ENCODE measurements at regions of chr13 and their contacts with region 1.

Region 1: GRCh38 chr13:24254146-24254841 is 55.1 kb upstream of the C1QTNF9 start:
- DNase-seq: peak in 7 of 9 donors; percentile 59 to 80 (median 68)
- ATAC-seq: peak; percentile 76
- H3K4me3 ChIP-seq: peak overlapping the region; percentile 82
- H3K4me3 Mint-ChIP-seq: peak overlapping the region; percentile 86 to 96 (median 92)
- H3K27ac ChIP-seq: peak overlapping the region; percentile 90
- H3K27ac Mint-ChIP-seq: peak overlapping the region; percentile 86 to 99 (median 95)
- H3K4me1 ChIP-seq: peaks cover 58 to 75% of the 10 kb centered on the region in 2 donors
- H3K4me1 Mint-ChIP-seq: peaks cover 44 to 96% (median 91%) of the 10 kb centered on the region in 7 donors
- H3K27me3 ChIP-seq: no peaks in the 10 kb centered on the region
- H3K27me3 Mint-ChIP-seq: no peaks in the 10 kb centered on the region

Region 2: GRCh38 chr13:23966691-23967615 is 287.3 kb before region 1 on chr13:
- CTCF ChIA-PET with region 1: no interaction called
- POLR2A ChIA-PET with region 1: no interaction called
- intact Hi-C with region 1: loop called in 1 of 2 experiments (anchors 1 kb)
- DNase-seq: peak in 6 of 9 donors; percentile 19 to 58 (median 48)
- ATAC-seq: peak; percentile 79
- H3K4me3 ChIP-seq: peak overlapping the region; percentile 57
- H3K4me3 Mint-ChIP-seq: peak overlapping the region; percentile 65 to 88 (median 84)
- H3K27ac ChIP-seq: peak overlapping the region; percentile 52
- H3K27ac Mint-ChIP-seq: peak overlapping the region; percentile 18 to 93 (median 88)
- H3K4me1 ChIP-seq: peaks cover 6% of the 10 kb centered on the region in 2 donors
- H3K4me1 Mint-ChIP-seq: peaks cover 6 to 39% (median 18%) of the 10 kb centered on the region in 7 donors
- H3K27me3 ChIP-seq: no peaks in the 10 kb centered on the region
- H3K27me3 Mint-ChIP-seq: no peaks in the 10 kb centered on the region

Region 3: DNA sequence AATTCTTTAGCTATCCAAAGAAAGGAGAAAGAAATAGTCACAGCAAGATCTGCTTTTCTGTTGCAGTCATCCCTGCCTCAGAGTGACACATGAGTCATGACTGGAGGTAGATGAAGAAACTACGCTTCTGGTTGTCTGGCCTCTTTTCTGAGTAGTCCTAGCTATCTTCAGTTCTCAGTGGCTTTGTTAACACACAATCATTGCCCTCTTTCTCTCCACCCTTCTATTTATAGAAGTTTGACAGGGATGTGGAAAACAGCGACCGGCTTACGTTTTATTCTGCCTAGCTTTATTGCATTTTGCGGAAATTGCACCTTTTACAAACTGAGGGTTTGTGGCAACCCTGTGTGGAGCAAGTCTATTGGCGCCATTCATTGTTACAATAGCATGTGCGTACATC is 67.1 kb before region 1 on chr13:
- CTCF ChIA-PET with region 1: no interaction called
- POLR2A ChIA-PET with region 1: no interaction called
- intact Hi-C with region 1: no loop called
- DNase-seq: no peak
- ATAC-seq: peak; percentile 57
- H3K4me3 ChIP-seq: no peak overlapping the region
- H3K4me3 Mint-ChIP-seq: no peak overlapping the region
- H3K27ac ChIP-seq: no peak overlapping the region
- H3K27ac Mint-ChIP-seq: peak overlapping the region in 1 of 9 donors; percentile 7
- H3K4me1 ChIP-seq: peaks cover 0 to 4% of the 10 kb centered on the region in 2 donors
- H3K4me1 Mint-ChIP-seq: peaks cover 3 to 28% (median 10%) of the 10 kb centered on the region in 7 donors
- H3K27me3 ChIP-seq: no peaks in the 10 kb centered on the region
- H3K27me3 Mint-ChIP-seq: no peaks in the 10 kb centered on the region

Region 4: DNA sequence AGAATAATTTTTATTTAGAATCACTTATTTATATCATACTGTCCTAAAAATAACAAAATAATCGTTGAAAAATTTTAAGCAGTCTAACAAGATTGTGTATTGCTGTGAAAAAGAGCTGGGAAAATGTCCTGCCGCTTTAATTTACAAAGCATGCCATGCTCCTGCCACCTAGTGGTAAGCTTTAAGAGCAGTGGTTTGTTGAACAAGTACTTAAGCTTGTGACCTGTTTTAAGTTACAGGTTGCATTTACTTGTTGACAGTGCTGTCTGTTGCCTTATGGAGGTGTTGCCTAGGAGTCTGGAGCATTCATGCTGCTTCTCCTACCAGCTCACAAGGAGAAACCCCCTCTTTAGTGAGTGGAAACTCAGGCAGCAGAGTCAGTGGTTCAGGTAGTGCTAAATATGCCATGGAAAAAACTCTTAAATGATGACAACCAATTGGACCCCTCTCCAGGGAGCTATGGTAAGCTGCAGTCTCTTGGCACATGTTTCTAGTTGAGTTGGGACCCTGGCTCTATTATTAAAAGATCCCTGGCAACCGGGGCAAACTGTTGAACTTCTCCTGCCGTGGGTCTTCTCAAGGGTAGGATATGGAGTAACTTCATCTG is 25.3 kb before region 1 on chr13:
- CTCF ChIA-PET with region 1: interaction called, 4 read pairs
- POLR2A ChIA-PET with region 1: interaction called, 5 read pairs
- intact Hi-C with region 1: loop called in 1 of 2 experiments (anchors 2 kb)
- DNase-seq: peak in 6 of 9 donors; percentile 39 to 57 (median 46)
- ATAC-seq: peak; percentile 73
- H3K4me3 ChIP-seq: no peak overlapping the region
- H3K4me3 Mint-ChIP-seq: no peak overlapping the region
- H3K27ac ChIP-seq: no peak overlapping the region
- H3K27ac Mint-ChIP-seq: no peak overlapping the region
- H3K4me1 ChIP-seq: peaks cover 0 to 40% of the 10 kb centered on the region in 2 donors
- H3K4me1 Mint-ChIP-seq: peaks cover 9 to 46% (median 19%) of the 10 kb centered on the region in 7 donors
- H3K27me3 ChIP-seq: no peaks in the 10 kb centered on the region
- H3K27me3 Mint-ChIP-seq: no peaks in the 10 kb centered on the region

Region 5: DNA sequence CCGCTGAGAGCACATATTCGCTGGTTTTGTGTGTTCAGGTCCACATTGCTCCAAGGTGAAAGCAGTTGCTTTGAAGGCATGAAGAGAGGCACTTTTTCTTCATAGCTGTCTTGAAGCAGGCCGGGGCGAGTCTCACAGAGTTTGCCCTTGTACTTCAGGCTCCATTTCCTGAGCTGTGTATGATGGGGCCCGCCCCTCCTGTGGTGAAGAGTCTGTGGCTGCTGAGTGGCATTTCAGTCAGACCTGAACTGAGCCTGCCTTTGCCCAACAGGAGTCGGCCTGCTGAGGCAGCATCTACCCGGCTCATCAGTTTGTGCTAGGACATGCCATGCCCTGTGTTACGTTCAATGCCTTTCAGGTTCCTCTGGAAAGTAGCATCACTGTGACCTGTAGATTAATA is 10.7 kb after region 1 on chr13:
- CTCF ChIA-PET with region 1: interaction called, 62 read pairs
- POLR2A ChIA-PET with region 1: interaction called, 637 read pairs
- intact Hi-C with region 1: loop called (anchors 1 kb)
- DNase-seq: peak; percentile 48 to 85 (median 83)
- ATAC-seq: peak; percentile 97
- H3K4me3 ChIP-seq: peak overlapping the region; percentile 28
- H3K4me3 Mint-ChIP-seq: peak overlapping the region; percentile 79 to 85 (median 82)
- H3K27ac ChIP-seq: peak overlapping the region; percentile 89
- H3K27ac Mint-ChIP-seq: peak overlapping the region; percentile 91 to 100 (median 98)
- H3K4me1 ChIP-seq: peaks cover 88 to 94% of the 10 kb centered on the region in 2 donors
- H3K4me1 Mint-ChIP-seq: peaks cover 64 to 98% (median 94%) of the 10 kb centered on the region in 7 donors
- H3K27me3 ChIP-seq: no peaks in the 10 kb centered on the region
- H3K27me3 Mint-ChIP-seq: no peaks in the 10 kb centered on the region

Region 6: GRCh38 chr13:24288870-24289269 is 34.6 kb after region 1 on chr13:
- CTCF ChIA-PET with region 1: interaction called, 6 read pairs
- POLR2A ChIA-PET with region 1: interaction called, 4 read pairs
- intact Hi-C with region 1: loop called (anchors 5 kb)
- DNase-seq: no peak
- ATAC-seq: no peak
- H3K4me3 ChIP-seq: no peak overlapping the region
- H3K4me3 Mint-ChIP-seq: no peak overlapping the region
- H3K27ac ChIP-seq: no peak overlapping the region
- H3K27ac Mint-ChIP-seq: no peak overlapping the region
- H3K4me1 ChIP-seq: no peaks in the 10 kb centered on the region
- H3K4me1 Mint-ChIP-seq: peaks cover 0 to 6% (median 2%) of the 10 kb centered on the region in 7 donors
- H3K27me3 ChIP-seq: no peaks in the 10 kb centered on the region
- H3K27me3 Mint-ChIP-seq: no peaks in the 10 kb centered on the region

Region 7: GRCh38 chr13:24512197-24512907 is 258.1 kb after region 1 on chr13 and contains the start of gene PARP4:
- CTCF ChIA-PET with region 1: no interaction called
- POLR2A ChIA-PET with region 1: no interaction called
- intact Hi-C with region 1: loop called (anchors 1 kb)
- DNase-seq: peak; percentile 49 to 74 (median 68)
- ATAC-seq: peak; percentile 85
- H3K4me3 ChIP-seq: peak within 1 kb of the TSS; percentile 95
- H3K4me3 Mint-ChIP-seq: peak within 1 kb of the TSS; percentile 88 to 96 (median 92)
- H3K27ac ChIP-seq: peak within 1 kb of the TSS; percentile 67
- H3K27ac Mint-ChIP-seq: peak within 1 kb of the TSS; percentile 68 to 93 (median 88)
- H3K4me1 ChIP-seq: peaks cover 3 to 7% of the 10 kb centered on the region in 2 donors
- H3K4me1 Mint-ChIP-seq: peaks cover 22 to 51% (median 41%) of the 10 kb centered on the region in 7 donors
- H3K27me3 ChIP-seq: no peaks in the 10 kb centered on the region
- H3K27me3 Mint-ChIP-seq: peaks cover 0 to 4% (median 0%) of the 10 kb centered on the region in 5 donors
- total RNA-seq, gene PARP4: 33.4 to 71.1 (median 65.4) TPM

Measured in naive thymus-derived CD4-positive, alpha-beta T cell (primary cell).